ENCODE measurements at regions of chr2 and their contacts with region 1.

Region 1: GRCh38 chr2:168118733-168119514 is 128.5 kb downstream of the STK39 start:
- DNase-seq: peak; percentile 54
- H3K4me3 ChIP-seq: no peak overlapping the region
- H3K27ac ChIP-seq: no peak overlapping the region
- H3K27me3 ChIP-seq: no peaks in the 10 kb centered on the region
- CTCF ChIP-seq: peak; percentile 70

Region 2: DNA sequence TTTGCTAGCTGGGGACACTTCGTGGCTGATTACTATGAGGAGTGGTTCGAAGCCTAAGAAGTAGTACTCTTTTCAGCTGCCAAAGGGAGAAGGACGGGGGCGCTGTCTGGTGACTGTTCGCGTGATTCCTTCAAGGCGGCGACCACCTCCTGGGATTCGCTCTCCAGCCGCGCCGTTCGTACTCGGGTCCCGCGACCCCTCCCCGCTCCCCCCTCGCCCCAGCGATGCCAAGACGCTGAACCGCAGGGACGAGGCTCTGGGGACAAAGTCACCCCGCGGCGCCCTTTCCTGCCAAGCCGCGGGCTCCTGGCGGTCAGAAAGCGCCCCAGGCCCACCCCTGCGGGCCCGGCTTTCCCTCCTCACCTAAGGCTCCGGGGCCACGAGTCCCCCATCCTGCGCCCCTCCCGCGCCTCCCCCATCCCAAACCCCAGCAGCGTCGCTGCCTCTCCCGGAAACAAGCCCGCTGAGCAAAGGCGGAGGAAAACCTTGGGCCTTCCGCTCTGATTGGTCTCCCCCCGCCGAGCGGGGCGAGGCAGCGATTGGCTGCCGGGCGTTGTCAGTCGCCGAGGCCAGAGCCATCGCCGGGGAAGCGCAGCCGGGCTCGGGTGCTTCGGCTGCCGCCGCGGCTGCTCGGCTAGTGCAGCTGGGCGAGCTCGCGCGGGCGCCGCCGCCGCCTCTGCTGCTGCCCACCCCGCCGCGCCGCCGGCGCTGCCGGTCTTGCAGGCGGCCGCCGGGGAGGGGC is 826.3 kb before region 1 on chr2:
- CTCF ChIA-PET with region 1: interaction called, 14 read pairs
- POLR2A ChIA-PET with region 1: no interaction called
- DNase-seq: peak; percentile 87
- H3K4me3 ChIP-seq: peak within 1 kb of the TSS; percentile 73
- H3K27ac ChIP-seq: peak within 1 kb of the TSS; percentile 77
- H3K27me3 ChIP-seq: no peaks in the 10 kb centered on the region
- CTCF ChIP-seq: peak; percentile 46

Region 3: DNA sequence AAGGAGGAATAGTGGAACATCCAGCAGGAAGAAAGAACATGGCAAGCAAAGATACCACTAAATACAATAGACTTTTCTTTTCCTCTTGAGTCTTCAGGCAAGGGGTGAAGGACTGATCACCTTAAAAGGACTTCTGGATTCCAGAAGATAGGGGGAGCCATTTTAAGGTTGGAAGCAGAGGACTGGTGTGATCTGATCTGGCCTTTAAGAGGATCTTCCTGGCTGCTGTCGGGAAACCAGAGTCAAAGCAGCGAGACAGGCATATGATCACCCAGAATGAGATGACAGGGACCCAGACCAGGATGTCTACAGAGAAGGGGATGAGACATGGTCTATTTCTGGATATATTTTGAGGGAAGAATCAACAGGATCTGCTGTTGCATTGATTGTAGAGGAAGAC is 429.5 kb before region 1 on chr2:
- CTCF ChIA-PET with region 1: interaction called, 10 read pairs
- POLR2A ChIA-PET with region 1: no interaction called
- DNase-seq: no peak
- H3K4me3 ChIP-seq: no peak overlapping the region
- H3K27ac ChIP-seq: no peak overlapping the region
- H3K27me3 ChIP-seq: no peaks in the 10 kb centered on the region
- CTCF ChIP-seq: peak; percentile 24

Region 4: GRCh38 chr2:167950571-167950970 is 168.4 kb before region 1 on chr2:
- CTCF ChIA-PET with region 1: interaction called, 267 read pairs
- POLR2A ChIA-PET with region 1: no interaction called
- DNase-seq: no peak
- H3K4me3 ChIP-seq: no peak overlapping the region
- H3K27ac ChIP-seq: no peak overlapping the region
- H3K27me3 ChIP-seq: no peaks in the 10 kb centered on the region
- CTCF ChIP-seq: no peak

Region 5: GRCh38 chr2:168064011-168064998 is 54.6 kb before region 1 on chr2:
- CTCF ChIA-PET with region 1: interaction called, 36 read pairs
- POLR2A ChIA-PET with region 1: no interaction called
- DNase-seq: no peak
- H3K4me3 ChIP-seq: no peak overlapping the region
- H3K27ac ChIP-seq: no peak overlapping the region
- H3K27me3 ChIP-seq: no peaks in the 10 kb centered on the region
- CTCF ChIP-seq: no peak

Region 6: DNA sequence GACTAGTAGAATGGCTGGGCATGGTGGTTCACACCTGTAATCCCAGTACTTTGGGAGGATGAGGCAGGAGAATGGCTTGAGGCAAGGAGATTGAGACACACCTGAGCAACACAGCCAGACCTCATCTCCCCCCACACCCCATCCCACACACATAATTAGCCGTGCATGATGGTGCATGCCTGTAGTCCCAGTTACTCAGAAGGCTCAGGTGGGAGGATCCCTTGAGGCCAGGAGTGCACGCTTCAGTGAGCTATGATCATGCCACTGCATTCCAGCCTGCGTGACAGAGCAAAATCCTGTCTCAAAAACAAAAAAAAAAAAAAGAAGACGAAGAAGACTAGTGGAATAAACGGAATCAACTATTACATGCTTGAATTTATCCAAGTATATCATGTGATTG is 21.5 kb before region 1 on chr2:
- CTCF ChIA-PET with region 1: interaction called, 19 read pairs
- POLR2A ChIA-PET with region 1: no interaction called
- DNase-seq: no peak
- H3K4me3 ChIP-seq: no peak overlapping the region
- H3K27ac ChIP-seq: no peak overlapping the region
- H3K27me3 ChIP-seq: no peaks in the 10 kb centered on the region
- CTCF ChIP-seq: no peak

Region 7: DNA sequence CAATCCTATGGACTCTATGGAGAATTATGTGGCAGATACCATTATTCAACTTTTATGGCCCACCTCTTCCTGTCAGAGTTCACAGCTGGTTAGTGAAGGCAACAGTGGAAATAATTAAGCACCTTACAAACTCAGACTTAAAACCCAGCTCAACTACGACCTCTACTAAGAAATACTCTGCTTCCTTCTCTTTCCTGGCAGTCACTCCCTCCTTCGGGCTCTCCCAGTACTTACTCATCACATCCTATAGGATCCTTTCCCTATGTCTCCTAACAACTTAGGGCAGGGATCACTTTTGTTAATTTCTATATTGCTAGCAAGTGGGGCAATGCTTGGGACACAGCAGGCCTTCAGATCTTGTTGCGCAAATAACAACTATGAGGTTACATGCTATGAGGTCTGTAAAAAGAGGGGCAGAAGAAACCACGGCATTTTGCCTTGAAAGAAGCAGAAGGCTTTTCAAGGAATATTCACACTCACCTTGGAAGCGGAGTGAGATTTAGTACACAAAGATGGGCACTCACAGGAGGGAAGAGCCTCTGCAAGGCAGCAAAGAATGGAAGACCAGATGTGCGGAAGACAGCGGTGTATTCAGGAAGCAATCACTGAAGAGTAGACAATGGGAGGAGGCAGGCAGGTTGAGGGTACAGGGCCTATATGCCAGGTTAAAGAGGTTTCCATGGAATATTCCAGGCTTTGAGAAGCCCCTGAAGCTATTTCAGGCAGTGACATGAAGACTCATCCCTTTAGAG is 126.3 kb after region 1 on chr2:
- CTCF ChIA-PET with region 1: interaction called, 11 read pairs
- POLR2A ChIA-PET with region 1: no interaction called
- DNase-seq: no peak
- H3K4me3 ChIP-seq: peak overlapping the region; percentile 40
- H3K27ac ChIP-seq: no peak overlapping the region
- H3K27me3 ChIP-seq: no peaks in the 10 kb centered on the region
- CTCF ChIP-seq: no peak